ENCODE measurements at regions of chr6 and their contacts with region 1.

Region 1: GRCh38 chr6:149043476-149044130 is 273.9 kb upstream of the TAB2 start:
- DNase-seq: no peak
- ATAC-seq: peak in 1 of 4 donors; percentile 41
- H3K4me3 ChIP-seq: no peak overlapping the region
- H3K27ac ChIP-seq: no peak overlapping the region
- H3K4me1 ChIP-seq: no peaks in the 10 kb centered on the region
- H3K27me3 ChIP-seq: no peaks in the 10 kb centered on the region
- CTCF ChIP-seq: no peak

Region 2: GRCh38 chr6:149147938-149148718 is 104.5 kb after region 1 on chr6:
- intact Hi-C with region 1: no loop called
- DNase-seq: no peak
- ATAC-seq: no peak
- H3K4me3 ChIP-seq: no peak overlapping the region
- H3K27ac ChIP-seq: no peak overlapping the region
- H3K4me1 ChIP-seq: no peaks in the 10 kb centered on the region
- H3K27me3 ChIP-seq: no peaks in the 10 kb centered on the region
- CTCF ChIP-seq: no peak

Region 3: GRCh38 chr6:149182262-149182661 is 138.7 kb after region 1 on chr6:
- intact Hi-C with region 1: no loop called
- DNase-seq: no peak
- ATAC-seq: peak in 2 of 4 donors; percentile 11 to 36
- H3K4me3 ChIP-seq: no peak overlapping the region
- H3K27ac ChIP-seq: no peak overlapping the region
- H3K4me1 ChIP-seq: no peaks in the 10 kb centered on the region
- H3K27me3 ChIP-seq: no peaks in the 10 kb centered on the region
- CTCF ChIP-seq: no peak

Region 4: DNA sequence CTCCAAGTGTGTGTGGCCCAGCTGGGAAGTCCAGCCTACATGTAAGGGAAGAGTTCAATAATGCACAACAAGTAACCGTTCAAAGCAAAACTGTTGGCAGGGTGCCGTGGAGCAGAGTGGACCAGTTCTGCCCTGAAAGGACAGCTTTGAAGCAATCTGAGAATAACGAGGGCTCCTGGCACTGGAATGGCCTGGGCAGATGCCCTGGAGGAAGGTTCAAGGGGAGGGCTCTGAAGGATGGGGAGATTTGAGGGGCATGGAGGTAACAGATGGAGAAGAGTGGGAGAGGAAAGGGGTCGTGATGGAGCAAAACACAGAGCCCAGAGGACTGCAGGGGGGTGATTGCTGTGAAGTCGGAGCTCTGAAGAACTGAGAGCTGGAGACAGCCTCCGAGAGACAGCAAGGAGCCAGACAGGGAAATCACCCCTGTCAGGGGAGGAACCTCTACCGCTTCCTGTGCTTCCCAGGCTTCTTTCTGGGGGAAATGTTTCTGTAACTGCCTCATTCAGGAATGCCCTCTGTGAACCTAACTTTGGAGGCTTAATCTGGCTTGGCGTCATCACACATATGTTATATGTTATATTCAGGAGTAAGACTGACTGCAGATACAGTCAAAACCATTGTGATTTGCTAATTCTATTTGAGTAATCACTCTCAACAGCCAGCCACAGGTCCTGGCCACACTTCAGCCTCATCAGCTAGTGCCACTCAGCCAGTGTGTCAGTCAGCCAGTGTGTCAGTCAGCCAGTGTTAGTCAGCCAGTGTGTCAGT is 400.0 kb after region 1 on chr6:
- intact Hi-C with region 1: loop called in 1 of 3 experiments (anchors 10 kb)
- DNase-seq: no peak
- ATAC-seq: no peak
- H3K4me3 ChIP-seq: no peak overlapping the region
- H3K27ac ChIP-seq: no peak overlapping the region
- H3K4me1 ChIP-seq: peaks cover 0 to 6% (median 4%) of the 10 kb centered on the region in 3 donors
- H3K27me3 ChIP-seq: no peaks in the 10 kb centered on the region
- CTCF ChIP-seq: no peak

Measured in pancreas (tissue), 10 donors.